IMR-90 (cell line): ENCODE measurements at regions of chr2 and their contacts with region 1.

Region 1: GRCh38 chr2:37414470-37414949 is 70.1 kb downstream of the QPCT start:
- DNase-seq: peak; percentile 81
- ATAC-seq: peak; percentile 84
- H3K4me3 ChIP-seq: no peak overlapping the region
- H3K27ac ChIP-seq: no peak overlapping the region
- H3K4me1 ChIP-seq: peaks cover 11% of the 10 kb centered on the region
- H3K27me3 ChIP-seq: no peaks in the 10 kb centered on the region
- CTCF ChIP-seq: peak; percentile 96
- POLR2A ChIP-seq: no peak
- RAD21 ChIP-seq: peak; percentile 97

Region 2: GRCh38 chr2:37585982-37586621 is 171.6 kb after region 1 on chr2:
- CTCF ChIA-PET with region 1: interaction called, 3 read pairs
- POLR2A ChIA-PET with region 1: no interaction called
- dilution Hi-C with region 1: no loop called
- in situ Hi-C with region 1: no loop called
- intact Hi-C with region 1: loop called (anchors 5 kb)
- DNase-seq: peak; percentile 93
- ATAC-seq: peak; percentile 25
- H3K4me3 ChIP-seq: no peak overlapping the region
- H3K27ac ChIP-seq: no peak overlapping the region
- H3K4me1 ChIP-seq: peaks cover 22% of the 10 kb centered on the region
- H3K27me3 ChIP-seq: no peaks in the 10 kb centered on the region
- CTCF ChIP-seq: no peak
- POLR2A ChIP-seq: no peak
- RAD21 ChIP-seq: no peak

Region 3: DNA sequence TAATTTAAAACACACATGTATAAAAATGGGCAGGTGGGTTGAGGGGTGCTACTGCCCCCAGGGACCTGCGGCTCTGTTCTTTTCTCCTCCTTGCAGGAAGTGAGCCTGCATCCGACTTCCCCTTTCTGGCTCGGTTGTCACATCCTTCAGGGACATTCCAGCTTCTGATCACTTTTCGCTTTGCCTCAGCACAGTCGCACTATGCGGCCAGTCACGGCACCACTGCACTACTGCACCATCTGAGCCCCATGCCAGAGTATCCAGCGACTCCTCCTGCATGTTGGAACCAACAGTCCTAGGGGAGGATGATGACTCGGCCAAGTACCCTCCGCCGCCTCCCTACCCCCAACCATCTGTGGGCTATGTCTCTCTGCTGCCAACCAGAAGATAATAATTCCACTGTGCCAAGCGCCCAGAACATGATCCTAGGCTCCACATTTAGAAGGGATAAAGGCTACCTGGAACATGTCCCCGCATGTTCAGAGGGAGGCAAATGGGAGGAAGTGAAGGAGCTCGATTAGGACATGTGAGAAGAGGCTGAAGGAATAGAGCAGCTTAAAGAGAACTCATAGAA is 239.4 kb after region 1 on chr2:
- CTCF ChIA-PET with region 1: no interaction called
- POLR2A ChIA-PET with region 1: no interaction called
- dilution Hi-C with region 1: no loop called
- in situ Hi-C with region 1: loop called (anchors 5 kb)
- intact Hi-C with region 1: no loop called
- DNase-seq: no peak
- ATAC-seq: peak; percentile 13
- H3K4me3 ChIP-seq: no peak overlapping the region
- H3K27ac ChIP-seq: peak overlapping the region; percentile 63; the same call in 1 of the 2 replicates
- H3K4me1 ChIP-seq: peaks cover 57% of the 10 kb centered on the region
- H3K27me3 ChIP-seq: no peaks in the 10 kb centered on the region
- CTCF ChIP-seq: no peak
- POLR2A ChIP-seq: no peak
- RAD21 ChIP-seq: no peak

Region 4: DNA sequence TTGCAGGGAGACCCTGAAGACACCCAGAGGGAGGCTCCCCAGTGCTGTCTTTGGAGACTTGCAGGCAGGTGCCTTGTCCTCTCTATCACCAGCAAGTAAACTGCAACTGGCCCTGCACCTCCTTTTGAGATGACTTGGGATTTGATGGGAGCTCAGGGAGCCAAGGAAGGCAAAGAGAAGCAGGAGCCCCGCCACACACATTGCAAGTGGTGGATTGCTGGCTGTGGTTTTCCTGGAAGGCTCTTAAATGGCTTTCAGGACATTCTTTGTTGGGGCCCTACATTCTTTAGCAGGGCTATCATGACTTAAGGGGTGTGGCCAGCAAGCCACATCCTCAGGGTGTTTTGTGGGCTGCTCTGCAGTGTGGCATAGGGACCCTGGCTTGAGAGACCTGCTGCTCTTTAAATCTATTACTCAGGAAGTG is 296.8 kb after region 1 on chr2:
- CTCF ChIA-PET with region 1: no interaction called
- POLR2A ChIA-PET with region 1: no interaction called
- dilution Hi-C with region 1: no loop called
- in situ Hi-C with region 1: no loop called
- intact Hi-C with region 1: no loop called
- DNase-seq: peak; percentile 91
- ATAC-seq: peak; percentile 88
- H3K4me3 ChIP-seq: no peak overlapping the region
- H3K27ac ChIP-seq: peak overlapping the region; percentile 71
- H3K4me1 ChIP-seq: peaks cover 12% of the 10 kb centered on the region
- H3K27me3 ChIP-seq: no peaks in the 10 kb centered on the region
- CTCF ChIP-seq: no peak
- POLR2A ChIP-seq: peak; percentile 39; the same call in 1 of the 2 replicates
- RAD21 ChIP-seq: no peak

Region 5: DNA sequence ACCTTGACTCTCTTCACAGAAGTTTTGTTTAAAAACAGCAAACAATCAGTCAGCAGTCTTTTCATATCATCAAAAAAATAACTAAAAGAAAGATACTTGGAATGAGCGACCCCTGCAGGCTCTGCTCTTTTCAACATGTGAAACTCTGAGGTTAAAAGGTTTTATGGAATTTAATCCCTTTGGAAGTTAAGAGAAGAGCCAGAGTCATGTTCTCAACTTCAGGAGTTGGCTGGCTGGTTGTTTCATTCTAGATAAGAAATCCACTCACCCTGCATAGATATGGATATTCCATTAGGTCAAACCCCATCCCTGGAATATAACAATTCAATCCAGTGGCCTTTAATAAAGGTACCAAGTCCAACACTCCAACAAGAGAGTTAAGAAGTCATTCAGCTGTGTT is 395.0 kb after region 1 on chr2:
- CTCF ChIA-PET with region 1: interaction called, 3 read pairs
- POLR2A ChIA-PET with region 1: no interaction called
- dilution Hi-C with region 1: no loop called
- in situ Hi-C with region 1: no loop called
- intact Hi-C with region 1: loop called (anchors 1 kb)
- DNase-seq: peak; percentile 65
- ATAC-seq: peak; percentile 70
- H3K4me3 ChIP-seq: no peak overlapping the region
- H3K27ac ChIP-seq: no peak overlapping the region
- H3K4me1 ChIP-seq: peaks cover 8% of the 10 kb centered on the region
- H3K27me3 ChIP-seq: no peaks in the 10 kb centered on the region
- CTCF ChIP-seq: peak; percentile 70
- POLR2A ChIP-seq: no peak
- RAD21 ChIP-seq: peak; percentile 62

Region 6: DNA sequence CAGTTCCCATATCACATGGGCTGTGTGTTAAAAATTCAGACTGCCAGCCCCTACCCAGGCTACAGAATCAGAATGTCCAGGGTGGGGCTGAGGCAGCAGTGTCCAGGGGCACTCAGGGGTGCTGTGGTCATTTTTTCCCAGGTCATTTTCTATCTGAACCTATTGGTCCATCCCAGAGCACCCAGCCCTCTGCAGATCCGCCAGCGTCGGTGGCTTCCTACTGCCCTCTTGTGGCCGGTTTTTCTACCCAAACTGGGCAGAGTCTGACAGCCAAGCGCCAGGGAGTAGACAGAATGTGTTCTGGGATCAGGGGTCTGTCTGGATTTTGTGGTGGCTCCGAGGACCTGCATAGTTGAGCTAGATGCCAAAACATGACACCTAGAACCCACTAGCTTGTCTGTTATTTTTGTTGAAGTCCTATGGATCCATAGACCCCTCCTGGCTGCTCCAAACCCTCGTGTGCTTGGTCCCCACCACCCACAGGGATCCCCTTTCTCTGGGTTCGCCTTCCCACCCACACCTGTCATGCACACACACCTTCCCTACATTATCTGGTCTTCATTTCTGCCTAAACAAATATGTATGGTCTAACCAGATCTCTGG is 476.5 kb after region 1 on chr2:
- CTCF ChIA-PET with region 1: interaction called, 3 read pairs
- POLR2A ChIA-PET with region 1: no interaction called
- dilution Hi-C with region 1: no loop called
- in situ Hi-C with region 1: no loop called
- intact Hi-C with region 1: loop called (anchors 1 kb)
- DNase-seq: peak; percentile 62
- ATAC-seq: peak; percentile 91
- H3K4me3 ChIP-seq: no peak overlapping the region
- H3K27ac ChIP-seq: no peak overlapping the region
- H3K4me1 ChIP-seq: no peaks in the 10 kb centered on the region
- H3K27me3 ChIP-seq: 0 out of 2 replicates have a peak, but pooled peaks cover 4% of the 10 kb centered on the region
- CTCF ChIP-seq: peak; percentile 82
- POLR2A ChIP-seq: no peak
- RAD21 ChIP-seq: peak; percentile 82